AG04450 (cell line): ENCODE measurements at regions of chr7 and their contacts with region 1.

Region 1: GRCh38 chr7:151110941-151111645 is 24.8 kb downstream of the AGAP3 start:
- DNase-seq: no peak
- H3K4me3 ChIP-seq: no peak overlapping the region
- H3K27ac ChIP-seq: no peak overlapping the region
- H3K27me3 ChIP-seq: no peaks in the 10 kb centered on the region
- CTCF ChIP-seq: peak; percentile 88

Region 2: GRCh38 chr7:150898475-150899011 is 212.6 kb before region 1 on chr7:
- CTCF ChIA-PET with region 1: interaction called, 15 read pairs
- POLR2A ChIA-PET with region 1: no interaction called
- DNase-seq: peak; percentile 29
- H3K4me3 ChIP-seq: no peak overlapping the region
- H3K27ac ChIP-seq: no peak overlapping the region
- H3K27me3 ChIP-seq: peaks cover 14% of the 10 kb centered on the region
- CTCF ChIP-seq: peak; percentile 90

Region 3: GRCh38 chr7:151008511-151009323 is 102.4 kb before region 1 on chr7:
- CTCF ChIA-PET with region 1: interaction called, 13 read pairs
- POLR2A ChIA-PET with region 1: interaction called, 9 read pairs
- DNase-seq: no peak
- H3K4me3 ChIP-seq: peak overlapping the region; percentile 5; the same call in 1 of the 2 replicates
- H3K27ac ChIP-seq: no peak overlapping the region
- H3K27me3 ChIP-seq: peaks cover 8% of the 10 kb centered on the region
- CTCF ChIP-seq: peak; percentile 58

Region 4: DNA sequence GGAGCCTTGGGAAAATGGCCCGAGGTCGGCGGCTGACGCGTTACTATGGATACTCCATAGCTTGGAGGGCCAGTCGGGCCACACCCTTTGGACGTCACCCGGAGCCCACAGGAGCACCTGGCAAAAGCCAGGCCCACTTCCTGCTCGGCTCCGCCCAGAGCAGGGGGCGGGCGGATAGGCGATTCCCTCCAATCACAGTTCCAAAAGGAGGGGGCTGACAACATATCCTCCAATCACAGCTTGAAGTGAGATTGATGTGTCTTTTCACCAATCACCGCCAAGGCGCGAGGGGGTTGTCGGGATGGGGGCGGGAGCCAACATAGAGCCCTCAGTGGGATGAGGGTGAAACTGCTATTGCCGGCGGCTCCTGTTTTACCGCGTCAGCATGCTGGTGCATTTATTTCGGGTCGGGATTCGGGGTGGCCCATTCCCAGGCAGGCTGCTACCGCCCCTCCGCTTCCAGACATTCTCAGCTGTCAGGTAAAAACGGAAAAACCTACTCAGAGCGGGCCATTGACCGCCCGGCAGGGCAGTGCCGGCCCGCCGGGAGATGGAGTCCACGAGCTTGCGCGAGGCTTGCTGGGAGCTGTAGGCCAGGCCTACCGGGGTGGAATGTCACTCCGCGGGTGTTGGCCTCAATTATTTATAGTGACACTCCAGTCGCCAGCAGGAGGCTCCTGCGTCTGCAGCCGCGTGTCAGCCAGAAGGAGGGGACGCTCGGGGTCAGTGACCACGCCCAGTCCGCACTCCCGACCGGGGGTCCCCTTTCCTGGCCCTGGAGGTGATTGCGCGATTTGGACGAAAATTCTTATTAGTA is 82.8 kb before region 1 on chr7 and contains the start of gene ABCB8:
- CTCF ChIA-PET with region 1: interaction called, 13 read pairs
- POLR2A ChIA-PET with region 1: interaction called, 5 read pairs
- DNase-seq: peak; percentile 96
- H3K4me3 ChIP-seq: peak within 1 kb of the TSS; percentile 90
- H3K27ac ChIP-seq: peak within 1 kb of the TSS; percentile 39
- H3K27me3 ChIP-seq: peaks cover 5% of the 10 kb centered on the region
- CTCF ChIP-seq: peak; percentile 46
- polyA plus RNA-seq, gene ABCB8: 10.7 and 13.7 TPM in 2 replicates

Region 5: DNA sequence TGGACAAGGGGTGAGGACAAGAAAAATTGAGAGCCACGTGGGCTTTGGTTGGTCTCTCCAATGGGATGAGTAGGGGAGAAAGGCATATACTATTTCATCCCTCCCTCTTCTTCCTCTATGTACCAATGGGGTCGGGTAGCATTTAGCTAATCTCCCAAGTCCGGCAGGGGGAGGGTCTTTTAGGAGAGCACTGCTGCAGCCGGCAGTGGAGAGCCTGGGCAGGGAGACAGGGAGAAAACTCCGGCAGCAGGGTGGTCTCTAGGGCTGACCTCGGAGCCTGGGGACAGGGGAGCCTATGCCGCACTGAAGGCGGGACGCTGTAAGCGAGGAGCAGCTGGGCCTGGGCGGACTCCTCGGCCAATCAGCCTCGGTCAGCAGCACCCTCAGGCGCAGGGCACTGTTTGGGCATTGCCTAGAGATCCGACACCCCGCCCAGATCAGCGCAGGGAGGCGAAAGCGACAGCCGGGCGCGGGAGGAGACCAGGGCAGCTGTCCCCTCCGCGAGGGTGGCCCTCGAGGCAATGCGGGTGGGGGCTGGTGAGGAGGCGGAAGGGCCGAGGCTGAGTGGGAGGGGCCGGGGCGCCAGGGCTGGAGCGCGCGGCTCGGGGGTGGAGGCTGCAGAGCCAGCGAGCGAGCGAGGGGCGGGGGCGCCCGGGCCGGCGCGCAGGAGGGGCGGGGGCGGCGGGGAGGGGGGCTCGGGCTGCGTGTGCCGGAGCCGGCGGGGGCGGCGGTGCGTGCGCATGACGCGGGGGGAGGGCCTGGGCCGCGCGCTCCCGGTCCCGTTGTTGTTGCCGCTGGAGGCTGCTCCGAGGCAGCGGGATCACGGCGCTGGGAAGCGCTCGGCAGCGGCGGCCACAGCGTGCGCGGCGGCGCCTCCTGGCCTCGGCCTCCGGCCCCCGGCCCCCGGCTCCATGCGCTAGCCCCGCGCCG is 25.1 kb before region 1 on chr7 and contains the start of gene AGAP3:
- CTCF ChIA-PET with region 1: interaction called, 86 read pairs
- POLR2A ChIA-PET with region 1: interaction called, 7 read pairs
- DNase-seq: no peak
- H3K4me3 ChIP-seq: peak within 1 kb of the TSS; percentile 77
- H3K27ac ChIP-seq: peak within 1 kb of the TSS; percentile 75
- H3K27me3 ChIP-seq: no peaks in the 10 kb centered on the region
- CTCF ChIP-seq: no peak
- polyA plus RNA-seq, gene AGAP3: 41.6 and 44.6 TPM in 2 replicates

Region 6: GRCh38 chr7:151123822-151124464 is 12.8 kb after region 1 on chr7:
- CTCF ChIA-PET with region 1: interaction called, 21 read pairs
- POLR2A ChIA-PET with region 1: no interaction called
- DNase-seq: peak; percentile 33
- H3K4me3 ChIP-seq: no peak overlapping the region
- H3K27ac ChIP-seq: no peak overlapping the region
- H3K27me3 ChIP-seq: no peaks in the 10 kb centered on the region
- CTCF ChIP-seq: peak; percentile 99